ENCODE measurements at regions of chr18 and their contacts with region 1.

Region 1: GRCh38 chr18:72372076-72372475 is 172.1 kb downstream of the CBLN2 start:
- DNase-seq: no peak
- H3K4me3 ChIP-seq: no peak overlapping the region
- H3K27ac ChIP-seq: no peak overlapping the region
- H3K4me1 ChIP-seq: no peaks in the 10 kb centered on the region
- H3K27me3 ChIP-seq: no peaks in the 10 kb centered on the region
- CTCF ChIP-seq: no peak
- EP300 ChIP-seq: no peak
- POLR2A ChIP-seq: no peak

Region 2: GRCh38 chr18:72342933-72343332 is 29.1 kb before region 1 on chr18:
- intact Hi-C with region 1: no loop called
- DNase-seq: no peak
- H3K4me3 ChIP-seq: no peak overlapping the region
- H3K27ac ChIP-seq: no peak overlapping the region
- H3K4me1 ChIP-seq: no peaks in the 10 kb centered on the region
- H3K27me3 ChIP-seq: no peaks in the 10 kb centered on the region
- CTCF ChIP-seq: no peak
- EP300 ChIP-seq: no peak
- POLR2A ChIP-seq: no peak

Region 3: DNA sequence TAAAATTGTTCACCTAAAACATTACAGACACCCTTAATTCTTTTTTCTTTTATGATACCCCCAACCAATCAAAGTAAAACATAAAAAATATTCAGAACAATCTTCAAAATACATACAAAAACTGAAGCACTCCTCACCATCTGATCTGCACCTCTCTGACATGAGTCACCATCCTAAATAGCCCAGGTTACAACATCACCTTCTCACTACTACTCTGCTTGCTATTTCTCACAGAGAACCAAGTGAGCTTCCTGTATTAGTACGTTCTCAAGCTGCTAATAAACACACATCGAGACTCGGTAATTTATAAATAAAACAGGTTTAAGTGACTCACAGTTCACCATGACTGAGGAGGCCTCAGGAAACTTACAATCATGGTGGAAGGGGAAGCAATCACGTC is 11.4 kb before region 1 on chr18:
- intact Hi-C with region 1: loop called in 1 of 4 experiments (anchors 1 kb)
- DNase-seq: no peak
- H3K4me3 ChIP-seq: no peak overlapping the region
- H3K27ac ChIP-seq: no peak overlapping the region
- H3K4me1 ChIP-seq: no peaks in the 10 kb centered on the region
- H3K27me3 ChIP-seq: no peaks in the 10 kb centered on the region
- CTCF ChIP-seq: no peak
- EP300 ChIP-seq: no peak
- POLR2A ChIP-seq: no peak